ENCODE measurements at regions of chr2 and their contacts with region 1.

Region 1: DNA sequence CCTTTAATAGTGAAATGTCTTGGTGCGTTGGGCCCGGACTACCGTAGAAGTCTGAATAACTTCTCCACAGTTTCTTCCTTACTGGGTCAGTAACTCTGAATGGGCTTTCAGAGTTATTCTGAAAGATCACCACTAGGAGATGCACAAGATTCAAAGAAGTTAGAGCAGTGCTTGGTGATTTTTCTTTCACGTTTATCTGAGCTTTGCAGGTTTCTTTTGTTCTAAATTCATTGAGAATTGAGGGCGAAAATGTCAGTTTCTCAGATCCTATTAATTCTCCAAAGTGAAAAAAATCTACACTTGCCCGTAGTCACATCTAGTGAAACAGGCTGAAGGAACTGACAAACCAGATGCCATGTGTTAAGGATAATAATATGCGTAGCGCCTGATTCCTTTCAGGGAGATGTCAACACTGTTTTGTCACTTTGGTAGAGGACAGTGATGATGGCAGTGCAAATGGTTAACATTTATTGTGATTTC is 70.1 kb downstream of the QPCT start:
- DNase-seq: peak; percentile 56
- H3K4me3 ChIP-seq: no peak overlapping the region
- H3K27ac ChIP-seq: no peak overlapping the region
- H3K27me3 ChIP-seq: no peaks in the 10 kb centered on the region
- CTCF ChIP-seq: peak; percentile 94

Region 2: DNA sequence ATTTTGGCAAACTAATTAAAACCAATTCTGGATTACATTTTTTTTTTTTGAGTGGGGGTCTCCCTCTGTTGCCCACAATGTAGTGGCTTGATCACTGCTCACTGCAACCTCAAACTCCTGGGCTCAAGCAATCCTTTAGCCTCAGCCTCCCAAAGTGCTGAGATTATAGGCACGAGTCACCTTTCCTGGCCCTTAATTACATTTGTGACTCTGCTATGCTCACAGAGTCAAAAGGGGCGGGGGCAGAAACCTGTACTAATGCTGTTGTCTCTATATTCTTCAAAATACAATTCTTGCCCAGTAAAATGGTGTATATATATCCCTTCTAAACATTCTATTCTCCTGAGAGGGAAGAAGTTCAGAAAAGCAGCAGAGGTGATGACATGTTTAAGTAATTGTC is 113.1 kb before region 1 on chr2:
- CTCF ChIA-PET with region 1: no interaction called
- POLR2A ChIA-PET with region 1: no interaction called
- DNase-seq: no peak
- H3K4me3 ChIP-seq: no peak overlapping the region
- H3K27ac ChIP-seq: no peak overlapping the region
- H3K27me3 ChIP-seq: no peaks in the 10 kb centered on the region
- CTCF ChIP-seq: no peak

Region 3: DNA sequence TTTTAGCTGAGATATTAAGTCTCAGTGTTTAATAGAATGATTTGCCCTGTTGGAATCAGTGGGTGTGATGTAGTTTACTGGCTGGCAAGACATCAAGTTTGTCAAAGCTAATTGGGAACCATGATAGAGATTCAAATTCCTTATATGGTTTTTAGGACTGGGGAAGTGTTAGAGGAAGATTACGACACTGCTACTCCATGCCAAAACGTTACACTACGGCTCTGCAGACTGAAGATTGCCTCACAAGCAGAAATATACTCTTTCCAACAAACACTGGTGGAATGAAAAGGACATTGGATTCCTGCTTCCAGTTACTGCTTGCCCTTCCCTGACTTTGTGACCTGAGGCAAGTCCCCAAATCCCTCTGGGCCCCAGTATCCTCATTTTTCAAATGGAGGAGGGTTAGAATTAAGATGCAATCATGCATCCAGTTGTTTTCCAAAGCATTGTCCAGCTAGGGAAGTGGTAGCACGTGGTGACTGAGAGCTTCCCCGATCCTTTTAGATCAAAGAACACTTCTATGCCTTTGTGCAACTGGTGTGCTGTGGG is 109.4 kb after region 1 on chr2:
- CTCF ChIA-PET with region 1: interaction called, 10 read pairs
- POLR2A ChIA-PET with region 1: no interaction called
- DNase-seq: peak; percentile 47
- H3K4me3 ChIP-seq: no peak overlapping the region
- H3K27ac ChIP-seq: no peak overlapping the region
- H3K27me3 ChIP-seq: no peaks in the 10 kb centered on the region
- CTCF ChIP-seq: no peak

Region 4: GRCh38 chr2:37590119-37590571 is 175.6 kb after region 1 on chr2:
- CTCF ChIA-PET with region 1: no interaction called
- POLR2A ChIA-PET with region 1: no interaction called
- DNase-seq: no peak
- H3K4me3 ChIP-seq: no peak overlapping the region
- H3K27ac ChIP-seq: no peak overlapping the region
- H3K27me3 ChIP-seq: no peaks in the 10 kb centered on the region
- CTCF ChIP-seq: no peak

Region 5: DNA sequence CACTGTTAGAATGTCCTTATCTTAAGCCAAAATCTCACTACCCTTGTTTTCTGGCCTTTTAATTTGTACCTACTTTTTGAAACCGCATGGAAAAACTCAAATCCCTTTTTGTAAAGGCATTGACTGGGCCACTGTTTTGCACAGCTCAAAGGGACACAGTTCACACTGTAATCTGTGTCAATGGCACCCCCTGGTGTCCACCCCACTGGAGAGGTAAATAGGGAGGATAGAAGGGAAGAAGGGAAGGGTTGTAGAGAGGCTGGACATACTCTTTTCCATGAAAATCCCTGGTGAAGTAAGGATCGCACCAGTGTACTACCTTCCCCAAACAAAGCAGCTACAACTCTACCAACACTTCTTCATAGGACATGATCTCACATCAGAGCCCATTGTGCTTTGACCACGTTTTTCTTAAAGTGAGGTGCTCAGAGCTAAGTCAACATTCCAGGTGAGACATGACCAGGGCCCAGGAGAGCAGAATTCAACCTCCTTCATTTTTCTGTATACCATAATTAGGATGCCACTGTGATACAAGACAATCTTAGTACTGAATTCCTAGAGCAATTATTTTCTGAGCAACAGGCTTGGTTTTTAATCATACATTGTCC is 418.2 kb after region 1 on chr2:
- CTCF ChIA-PET with region 1: interaction called, 50 read pairs
- POLR2A ChIA-PET with region 1: no interaction called
- DNase-seq: peak; percentile 64
- H3K4me3 ChIP-seq: no peak overlapping the region
- H3K27ac ChIP-seq: no peak overlapping the region
- H3K27me3 ChIP-seq: no peaks in the 10 kb centered on the region
- CTCF ChIP-seq: peak; percentile 85